ENCODE measurements at regions of chr15 and their contacts with region 1.

Region 1: GRCh38 chr15:78895471-78895870 is 22.8 kb downstream of the MORF4L1 start:
- DNase-seq: no peak
- H3K4me3 ChIP-seq: no peak overlapping the region
- H3K27ac ChIP-seq: no peak overlapping the region
- H3K27me3 ChIP-seq: no peaks in the 10 kb centered on the region
- CTCF ChIP-seq: no peak

Region 2: GRCh38 chr15:78761020-78761419 is 134.5 kb before region 1 on chr15:
- CTCF ChIA-PET with region 1: no interaction called
- POLR2A ChIA-PET with region 1: interaction called, 10 read pairs
- DNase-seq: no peak
- H3K4me3 ChIP-seq: no peak overlapping the region
- H3K27ac ChIP-seq: no peak overlapping the region
- H3K27me3 ChIP-seq: no peaks in the 10 kb centered on the region
- CTCF ChIP-seq: no peak

Region 3: DNA sequence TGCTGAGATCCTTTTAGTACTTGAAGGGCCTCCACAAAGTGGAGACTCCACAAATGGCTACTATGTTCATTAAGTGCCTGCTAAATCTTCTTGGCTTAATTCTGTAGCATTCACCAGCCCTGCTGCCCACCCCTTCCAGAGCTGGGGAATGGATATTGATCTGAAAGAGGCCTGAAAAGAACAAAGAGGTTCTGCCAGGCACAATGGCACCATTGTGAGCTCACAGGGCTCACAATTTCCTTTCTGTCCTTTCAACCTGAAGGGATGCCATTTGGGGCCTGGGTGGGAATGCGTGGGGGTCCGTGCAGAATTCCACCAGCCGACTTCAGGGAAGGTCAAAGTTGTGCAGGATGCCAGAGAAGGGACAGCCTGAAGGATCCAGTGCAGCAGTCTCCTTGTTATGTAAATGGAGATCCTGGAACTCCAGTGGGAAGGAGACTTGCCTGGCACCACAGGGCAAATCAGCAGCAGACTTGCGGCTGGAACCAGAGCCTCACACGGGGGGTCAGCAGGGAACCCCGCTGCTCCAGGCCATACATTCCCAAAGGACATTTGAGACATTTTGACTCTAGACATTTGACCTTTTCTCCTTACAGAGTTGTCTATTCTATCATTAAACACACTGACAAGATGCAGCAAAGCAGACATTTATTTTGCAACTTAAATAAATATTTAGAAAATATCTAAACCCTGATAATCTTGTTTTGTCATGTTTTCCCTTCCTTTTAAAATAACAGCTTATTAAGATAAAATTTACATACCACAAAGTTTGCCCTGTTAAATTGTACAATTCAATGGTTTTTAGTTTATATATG is 44.3 kb before region 1 on chr15:
- CTCF ChIA-PET with region 1: no interaction called
- POLR2A ChIA-PET with region 1: no interaction called
- DNase-seq: no peak
- H3K4me3 ChIP-seq: no peak overlapping the region
- H3K27ac ChIP-seq: no peak overlapping the region
- H3K27me3 ChIP-seq: no peaks in the 10 kb centered on the region
- CTCF ChIP-seq: no peak

Region 4: GRCh38 chr15:79154483-79155135 is 259.1 kb after region 1 on chr15:
- CTCF ChIA-PET with region 1: no interaction called
- POLR2A ChIA-PET with region 1: no interaction called
- DNase-seq: no peak
- H3K4me3 ChIP-seq: no peak overlapping the region
- H3K27ac ChIP-seq: no peak overlapping the region
- H3K27me3 ChIP-seq: peaks cover 9% of the 10 kb centered on the region
- CTCF ChIP-seq: no peak

Measured in AG04450 (cell line).